CD4-positive, alpha-beta T cell (primary cell): ENCODE measurements at regions of chr12 and their contacts with region 1.

Region 1: GRCh38 chr12:810671-811415 is 58.5 kb downstream of the WNK1 start:
- DNase-seq: no peak
- ATAC-seq: peak; percentile 34
- H3K4me3 ChIP-seq: no peak overlapping the region
- H3K4me3 Mint-ChIP-seq: peak overlapping the region; percentile 64
- H3K27ac ChIP-seq: peak overlapping the region in 1 of 2 donors; percentile 26
- H3K27ac Mint-ChIP-seq: peak overlapping the region; percentile 78
- H3K4me1 ChIP-seq: peaks cover 39% of the 10 kb centered on the region
- H3K4me1 Mint-ChIP-seq: peaks cover 83% of the 10 kb centered on the region
- H3K27me3 ChIP-seq: no peaks in the 10 kb centered on the region
- H3K27me3 Mint-ChIP-seq: no peaks in the 10 kb centered on the region
- CTCF ChIP-seq: no peak

Region 2: GRCh38 chr12:569803-570434 is 240.9 kb before region 1 on chr12:
- CTCF ChIA-PET with region 1: interaction called, 16 read pairs
- POLR2A ChIA-PET with region 1: no interaction called
- intact Hi-C with region 1: loop called in 1 of 2 experiments (anchors 2 kb)
- DNase-seq: peak; percentile 78 to 93 (median 84)
- ATAC-seq: peak; percentile 98
- H3K4me3 ChIP-seq: peak overlapping the region; percentile 69
- H3K4me3 Mint-ChIP-seq: peak overlapping the region; percentile 87
- H3K27ac ChIP-seq: no peak overlapping the region
- H3K27ac Mint-ChIP-seq: peak overlapping the region; percentile 78
- H3K4me1 ChIP-seq: peaks cover 53% of the 10 kb centered on the region
- H3K4me1 Mint-ChIP-seq: peaks cover 60% of the 10 kb centered on the region
- H3K27me3 ChIP-seq: no peaks in the 10 kb centered on the region
- H3K27me3 Mint-ChIP-seq: no peaks in the 10 kb centered on the region
- CTCF ChIP-seq: peak; percentile 92

Region 3: DNA sequence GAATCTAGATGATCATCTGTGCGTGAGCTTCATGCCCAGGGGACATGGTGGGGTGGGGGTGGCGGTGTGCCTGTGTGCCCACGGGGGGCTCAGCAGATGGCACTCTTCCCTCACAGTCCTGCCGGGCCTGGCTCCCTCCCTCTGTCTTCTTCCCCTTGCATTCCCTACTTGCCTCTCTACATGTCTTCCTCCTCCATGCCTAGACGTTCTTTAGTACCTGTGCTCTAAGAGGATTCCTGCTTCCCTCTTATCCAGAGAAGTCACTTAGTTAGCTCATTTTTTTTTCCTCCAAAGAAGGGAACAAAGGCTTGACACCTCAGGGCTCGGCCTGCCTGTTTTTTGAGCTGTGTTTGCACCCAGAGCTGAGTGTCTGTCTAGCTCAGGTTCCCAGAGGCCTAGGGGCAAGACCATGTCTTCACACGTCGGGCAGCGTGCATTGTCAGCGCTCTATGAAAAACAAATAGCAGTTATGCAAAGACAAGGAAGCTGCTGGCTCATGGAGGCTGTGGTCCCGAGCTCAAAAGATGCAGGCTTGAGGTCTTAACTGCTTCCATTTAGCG is 196.4 kb before region 1 on chr12:
- CTCF ChIA-PET with region 1: interaction called, 10 read pairs
- POLR2A ChIA-PET with region 1: interaction called, 3 read pairs
- intact Hi-C with region 1: loop called (anchors 1 kb)
- DNase-seq: peak in 12 of 14 experiments; percentile 10 to 66 (median 24)
- ATAC-seq: peak; percentile 58
- H3K4me3 ChIP-seq: no peak overlapping the region
- H3K4me3 Mint-ChIP-seq: no peak overlapping the region
- H3K27ac ChIP-seq: no peak overlapping the region
- H3K27ac Mint-ChIP-seq: no peak overlapping the region
- H3K4me1 ChIP-seq: peaks cover 36% of the 10 kb centered on the region
- H3K4me1 Mint-ChIP-seq: peaks cover 44% of the 10 kb centered on the region
- H3K27me3 ChIP-seq: no peaks in the 10 kb centered on the region
- H3K27me3 Mint-ChIP-seq: no peaks in the 10 kb centered on the region
- CTCF ChIP-seq: peak; percentile 60

Region 4: DNA sequence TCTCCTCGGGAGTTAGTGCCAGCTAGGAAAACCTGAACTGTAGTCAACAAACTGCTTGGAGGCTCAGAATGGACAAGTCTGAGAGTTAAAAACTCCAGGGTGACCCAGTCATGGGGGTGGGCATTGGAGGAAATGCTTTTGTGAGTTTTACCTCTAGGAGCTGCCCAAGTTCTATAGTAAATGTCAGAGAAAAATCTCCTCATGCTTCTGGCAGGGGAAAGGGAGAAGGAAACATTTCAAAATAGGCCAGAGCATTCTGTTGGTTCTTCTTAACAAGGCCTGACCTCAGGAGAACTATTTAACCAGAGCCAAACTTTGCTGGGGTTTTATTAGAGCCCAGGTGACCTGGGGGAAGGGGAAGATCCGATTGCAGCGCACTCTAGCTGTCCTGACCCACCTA is 159.9 kb before region 1 on chr12:
- CTCF ChIA-PET with region 1: interaction called, 5 read pairs
- POLR2A ChIA-PET with region 1: no interaction called
- intact Hi-C with region 1: loop called in 1 of 2 experiments (anchors 5 kb)
- DNase-seq: peak in 3 of 14 experiments; percentile 38 to 53 (median 39)
- ATAC-seq: peak; percentile 51
- H3K4me3 ChIP-seq: no peak overlapping the region
- H3K4me3 Mint-ChIP-seq: no peak overlapping the region
- H3K27ac ChIP-seq: no peak overlapping the region
- H3K27ac Mint-ChIP-seq: no peak overlapping the region
- H3K4me1 ChIP-seq: peaks cover 3% of the 10 kb centered on the region
- H3K4me1 Mint-ChIP-seq: peaks cover 22% of the 10 kb centered on the region
- H3K27me3 ChIP-seq: no peaks in the 10 kb centered on the region
- H3K27me3 Mint-ChIP-seq: no peaks in the 10 kb centered on the region
- CTCF ChIP-seq: peak; percentile 35

Region 5: GRCh38 chr12:662566-663292 is 148.1 kb before region 1 on chr12:
- CTCF ChIA-PET with region 1: interaction called, 4 read pairs
- POLR2A ChIA-PET with region 1: no interaction called
- intact Hi-C with region 1: loop called in 1 of 2 experiments (anchors 5 kb)
- DNase-seq: peak in 1 of 14 experiments; percentile 25
- ATAC-seq: no peak
- H3K4me3 ChIP-seq: peak overlapping the region; percentile 1
- H3K4me3 Mint-ChIP-seq: peak overlapping the region; percentile 84
- H3K27ac ChIP-seq: no peak overlapping the region
- H3K27ac Mint-ChIP-seq: peak overlapping the region; percentile 63
- H3K4me1 ChIP-seq: peaks cover 67% of the 10 kb centered on the region
- H3K4me1 Mint-ChIP-seq: peaks cover 62% of the 10 kb centered on the region
- H3K27me3 ChIP-seq: no peaks in the 10 kb centered on the region
- H3K27me3 Mint-ChIP-seq: no peaks in the 10 kb centered on the region
- CTCF ChIP-seq: no peak

Region 6: DNA sequence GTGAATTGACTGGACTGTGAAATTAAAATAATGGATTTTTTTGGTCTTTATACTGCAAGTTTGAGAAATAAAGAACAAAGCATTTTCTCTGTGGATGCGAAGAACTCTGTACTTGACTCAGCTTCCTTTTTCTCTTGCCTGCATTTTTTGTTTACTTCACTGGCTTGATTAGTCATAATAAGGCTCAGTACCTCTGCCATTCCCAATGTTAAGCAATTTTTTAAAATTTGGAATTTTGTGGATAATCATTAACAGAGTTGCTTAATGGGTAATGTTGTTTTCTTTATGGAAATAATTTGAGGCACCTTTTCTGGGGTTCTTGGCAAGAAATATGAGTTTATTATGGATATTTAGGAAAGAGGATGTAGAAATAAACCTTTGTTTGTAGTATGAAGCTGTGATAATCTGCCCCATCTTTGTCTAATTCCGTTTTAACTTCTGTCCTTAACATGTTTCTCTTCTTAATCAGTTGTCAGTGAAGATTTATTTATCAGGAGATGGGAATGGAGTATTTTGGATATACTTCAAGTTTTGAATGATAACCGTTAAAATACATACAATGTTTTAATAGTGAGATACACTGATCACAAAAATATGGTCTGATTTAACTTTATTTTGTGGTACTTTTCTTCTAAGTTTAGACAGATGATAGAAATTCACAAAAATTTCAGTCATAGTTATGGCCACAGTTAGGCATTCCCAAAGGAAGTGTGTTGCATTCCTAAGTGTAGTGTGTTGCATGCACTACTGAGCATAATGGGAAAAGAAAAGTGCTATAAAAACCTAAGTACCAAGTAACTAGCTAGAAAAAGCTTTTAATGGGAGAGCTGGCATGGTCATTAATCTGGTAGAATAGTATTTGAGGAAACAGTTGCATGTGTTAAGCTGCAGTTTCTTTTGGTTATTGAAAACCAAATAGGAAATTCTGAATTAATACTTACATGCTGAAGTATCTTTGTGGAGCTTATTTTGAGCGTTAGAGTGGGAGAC is 30.8 kb before region 1 on chr12:
- CTCF ChIA-PET with region 1: interaction called, 13 read pairs
- POLR2A ChIA-PET with region 1: interaction called, 5 read pairs
- intact Hi-C with region 1: no loop called
- DNase-seq: peak in 1 of 14 experiments; percentile 30
- ATAC-seq: peak; percentile 63
- H3K4me3 ChIP-seq: peak overlapping the region; percentile 21
- H3K4me3 Mint-ChIP-seq: peak overlapping the region; percentile 88
- H3K27ac ChIP-seq: no peak overlapping the region
- H3K27ac Mint-ChIP-seq: peak overlapping the region; percentile 43
- H3K4me1 ChIP-seq: peaks cover 39% of the 10 kb centered on the region
- H3K4me1 Mint-ChIP-seq: peaks cover 76% of the 10 kb centered on the region
- H3K27me3 ChIP-seq: no peaks in the 10 kb centered on the region
- H3K27me3 Mint-ChIP-seq: no peaks in the 10 kb centered on the region
- CTCF ChIP-seq: no peak

Region 7: DNA sequence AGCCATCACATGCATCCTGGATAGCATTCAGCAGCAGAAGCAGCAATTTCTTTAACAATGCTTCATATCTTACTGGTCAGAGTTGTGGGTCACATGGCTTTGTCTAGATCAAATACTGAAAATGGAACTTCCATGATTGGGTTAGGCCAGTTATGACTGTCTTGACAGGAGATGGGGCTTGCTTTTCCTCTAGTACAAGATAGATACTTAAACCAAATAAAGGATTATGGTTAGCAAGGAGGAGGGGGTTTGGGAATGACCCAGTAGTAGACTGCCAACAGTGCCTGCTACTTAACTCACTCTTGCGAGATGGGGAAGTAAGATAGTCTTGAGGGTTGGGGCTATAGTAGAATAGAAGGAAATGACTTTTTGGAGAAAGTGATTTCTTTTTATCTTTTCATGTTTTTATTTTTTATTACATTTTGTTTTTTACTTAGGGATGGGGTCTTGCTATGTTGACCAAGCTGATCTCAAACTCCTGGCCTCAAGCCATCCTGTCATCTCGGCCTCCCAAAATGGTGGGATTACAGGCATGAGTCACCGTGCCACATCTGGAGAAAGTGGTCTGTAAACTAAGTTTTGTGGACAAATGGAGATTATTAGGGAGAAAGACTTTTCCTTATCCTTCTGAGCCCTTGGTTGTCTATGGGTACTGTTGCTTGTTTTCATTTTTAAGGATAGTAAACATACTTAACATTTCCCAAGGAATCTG is 20.8 kb before region 1 on chr12:
- CTCF ChIA-PET with region 1: no interaction called
- POLR2A ChIA-PET with region 1: interaction called, 3 read pairs
- intact Hi-C with region 1: loop called in 1 of 2 experiments (anchors 2 kb)
- DNase-seq: no peak
- ATAC-seq: peak; percentile 26
- H3K4me3 ChIP-seq: no peak overlapping the region
- H3K4me3 Mint-ChIP-seq: peak overlapping the region; percentile 64
- H3K27ac ChIP-seq: no peak overlapping the region
- H3K27ac Mint-ChIP-seq: peak overlapping the region; percentile 62
- H3K4me1 ChIP-seq: peaks cover 36% of the 10 kb centered on the region
- H3K4me1 Mint-ChIP-seq: peaks cover 91% of the 10 kb centered on the region
- H3K27me3 ChIP-seq: no peaks in the 10 kb centered on the region
- H3K27me3 Mint-ChIP-seq: no peaks in the 10 kb centered on the region
- CTCF ChIP-seq: no peak